K562 (cell line): ENCODE measurements at regions of chr14 and their contacts with region 1.

Region 1: GRCh38 chr14:34722717-34723545 is 8.5 kb upstream of the CFL2 start:
- DNase-seq: peak; percentile 37 to 60 (median 51)
- ATAC-seq: peak; percentile 84
- H3K4me3 ChIP-seq: no peak overlapping the region
- H3K27ac ChIP-seq: no peak overlapping the region
- H3K4me1 ChIP-seq: 0 out of 5 replicates have a peak, but pooled peaks cover 0 to 2% of the 10 kb centered on the region in 2 experiments
- H3K27me3 ChIP-seq: no peaks in the 10 kb centered on the region
- CTCF ChIP-seq: peak; percentile 53 to 79 (median 69)
- EP300 ChIP-seq: no peak
- POLR2A ChIP-seq: no peak
- RAD21 ChIP-seq: peak; percentile 44 to 74; a peak in 3 of 4 replicates

Region 2: GRCh38 chr14:33938131-33938949 is 784.6 kb before region 1 on chr14:
- CTCF ChIA-PET with region 1: no interaction called
- POLR2A ChIA-PET with region 1: no interaction called
- in situ Hi-C with region 1: no loop called
- intact Hi-C with region 1: no loop called
- DNase-seq: peak; percentile 54 to 85 (median 63)
- ATAC-seq: peak; percentile 84
- H3K4me3 ChIP-seq: peak overlapping the region; percentile 15
- H3K27ac ChIP-seq: peak overlapping the region; percentile 74
- H3K4me1 ChIP-seq: peaks cover 16 to 61% of the 10 kb centered on the region in 2 experiments; a peak in 4 of 5 replicates
- H3K27me3 ChIP-seq: no peaks in the 10 kb centered on the region
- CTCF ChIP-seq: no peak
- EP300 ChIP-seq: no peak
- POLR2A ChIP-seq: no peak
- RAD21 ChIP-seq: no peak

Region 3: GRCh38 chr14:34629657-34630529 is 93.0 kb before region 1 on chr14 and contains the start of gene SNX6:
- CTCF ChIA-PET with region 1: no interaction called
- POLR2A ChIA-PET with region 1: no interaction called
- in situ Hi-C with region 1: no loop called
- intact Hi-C with region 1: no loop called
- DNase-seq: peak; percentile 81 to 95 (median 94)
- ATAC-seq: peak; percentile 93
- H3K4me3 ChIP-seq: peak within 1 kb of the TSS; percentile 78
- H3K27ac ChIP-seq: peak within 1 kb of the TSS; percentile 87
- H3K4me1 ChIP-seq: peaks cover 2 to 21% of the 10 kb centered on the region in 2 experiments; a peak in 3 of 5 replicates
- H3K27me3 ChIP-seq: no peaks in the 10 kb centered on the region
- CTCF ChIP-seq: no peak
- EP300 ChIP-seq: no peak
- POLR2A ChIP-seq: peak; percentile 73
- RAD21 ChIP-seq: no peak
- polyA plus RNA-seq, gene SNX6: 110 to 111 TPM

Region 4: GRCh38 chr14:34671716-34672115 is 51.2 kb before region 1 on chr14:
- CTCF ChIA-PET with region 1: interaction called, 20 read pairs
- POLR2A ChIA-PET with region 1: no interaction called
- in situ Hi-C with region 1: no loop called
- intact Hi-C with region 1: loop called (anchors 2 kb)
- DNase-seq: no peak
- ATAC-seq: no peak
- H3K4me3 ChIP-seq: no peak overlapping the region
- H3K27ac ChIP-seq: no peak overlapping the region
- H3K4me1 ChIP-seq: no peaks in the 10 kb centered on the region; a peak in 1 of 5 replicates
- H3K27me3 ChIP-seq: no peaks in the 10 kb centered on the region
- CTCF ChIP-seq: no peak
- EP300 ChIP-seq: no peak
- POLR2A ChIP-seq: no peak
- RAD21 ChIP-seq: no peak

Region 5: DNA sequence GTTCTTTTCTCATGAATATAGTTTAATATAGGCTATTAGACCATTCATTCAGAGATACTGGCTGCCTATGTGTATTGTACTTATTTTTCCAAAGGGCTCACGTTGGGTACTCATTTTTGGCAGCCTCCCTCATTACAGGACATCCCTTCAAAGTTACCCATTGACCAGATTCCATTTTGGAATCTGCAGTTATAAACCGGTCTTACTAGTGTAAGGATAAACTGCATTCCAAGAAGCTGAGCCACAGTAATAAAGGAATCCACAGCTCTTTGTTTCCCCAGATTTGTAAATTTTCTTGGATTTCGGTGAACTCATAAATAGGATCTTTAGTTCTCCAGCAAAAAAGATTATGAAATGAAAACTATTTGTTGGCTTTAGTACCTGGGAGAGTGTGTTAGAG is 10.3 kb after region 1 on chr14:
- CTCF ChIA-PET with region 1: no interaction called
- POLR2A ChIA-PET with region 1: no interaction called
- in situ Hi-C with region 1: no loop called
- intact Hi-C with region 1: no loop called
- DNase-seq: no peak
- ATAC-seq: no peak
- H3K4me3 ChIP-seq: no peak overlapping the region
- H3K27ac ChIP-seq: no peak overlapping the region
- H3K4me1 ChIP-seq: no peaks in the 10 kb centered on the region
- H3K27me3 ChIP-seq: no peaks in the 10 kb centered on the region
- CTCF ChIP-seq: no peak
- EP300 ChIP-seq: no peak
- POLR2A ChIP-seq: no peak
- RAD21 ChIP-seq: no peak

Region 6: DNA sequence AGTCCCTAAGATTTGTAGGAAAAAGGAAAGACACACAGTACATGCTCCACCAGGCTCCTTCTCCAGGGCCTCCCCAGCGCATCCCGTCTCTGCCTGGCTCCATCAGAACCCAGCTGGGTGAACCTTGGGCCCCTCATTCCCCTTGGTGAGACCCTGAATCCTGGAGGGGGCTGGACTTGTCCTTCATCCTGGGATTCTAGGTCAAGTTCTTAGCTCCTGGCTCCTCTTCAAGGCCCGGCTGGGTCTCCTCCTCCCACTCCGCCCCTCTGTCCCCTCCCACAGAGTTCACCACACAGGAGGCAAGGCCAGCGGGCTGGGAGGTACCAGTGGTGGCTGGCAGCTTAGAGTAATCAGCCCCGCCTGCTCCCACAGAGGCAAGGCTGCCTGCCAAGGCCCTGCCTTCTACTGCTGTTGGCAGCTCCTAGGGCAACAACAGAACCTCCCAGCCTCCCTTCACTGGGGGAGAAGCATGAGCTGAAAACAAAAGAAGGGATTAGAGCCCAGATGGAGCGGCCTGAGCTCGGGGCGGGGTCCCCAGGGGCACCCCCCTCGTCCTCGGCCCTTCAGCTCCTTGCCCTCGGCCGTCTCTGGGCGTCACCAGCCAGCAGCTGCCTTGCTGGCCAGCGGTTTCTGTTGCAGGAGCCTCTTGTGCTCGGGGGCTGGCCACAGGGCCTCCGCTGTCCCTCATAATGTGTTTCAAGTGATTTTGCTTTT is 618.7 kb after region 1 on chr14:
- CTCF ChIA-PET with region 1: no interaction called
- POLR2A ChIA-PET with region 1: no interaction called
- in situ Hi-C with region 1: no loop called
- intact Hi-C with region 1: no loop called
- DNase-seq: peak in 1 of 4 experiments; percentile 44
- ATAC-seq: peak; percentile 57
- H3K4me3 ChIP-seq: no peak overlapping the region
- H3K27ac ChIP-seq: no peak overlapping the region
- H3K4me1 ChIP-seq: peaks cover 16 to 33% of the 10 kb centered on the region in 2 experiments
- H3K27me3 ChIP-seq: no peaks in the 10 kb centered on the region
- CTCF ChIP-seq: no peak
- EP300 ChIP-seq: no peak
- POLR2A ChIP-seq: no peak
- RAD21 ChIP-seq: no peak